H1 (cell line): ENCODE measurements at regions of chr12 and their contacts with region 1.

Region 1: GRCh38 chr12:12786716-12787601 is 1.5 kb downstream of the APOLD1 start:
- DNase-seq: peak; percentile 57 to 73
- H3K4me3 ChIP-seq: peak overlapping the region in 2 of 4 experiments; percentile 37 to 50; a peak in 6 of 8 replicates
- H3K27ac ChIP-seq: no peak overlapping the region
- H3K4me1 ChIP-seq: peaks cover 5 to 13% (median 11%) of the 10 kb centered on the region in 4 experiments
- H3K27me3 ChIP-seq: peaks cover 12 to 29% (median 18%) of the 10 kb centered on the region in 4 experiments
- CTCF ChIP-seq: no peak
- EP300 ChIP-seq: no peak
- POLR2A ChIP-seq: peak in 1 of 2 experiments; percentile 43; a peak in 1 of 3 replicates
- RAD21 ChIP-seq: no peak

Region 2: DNA sequence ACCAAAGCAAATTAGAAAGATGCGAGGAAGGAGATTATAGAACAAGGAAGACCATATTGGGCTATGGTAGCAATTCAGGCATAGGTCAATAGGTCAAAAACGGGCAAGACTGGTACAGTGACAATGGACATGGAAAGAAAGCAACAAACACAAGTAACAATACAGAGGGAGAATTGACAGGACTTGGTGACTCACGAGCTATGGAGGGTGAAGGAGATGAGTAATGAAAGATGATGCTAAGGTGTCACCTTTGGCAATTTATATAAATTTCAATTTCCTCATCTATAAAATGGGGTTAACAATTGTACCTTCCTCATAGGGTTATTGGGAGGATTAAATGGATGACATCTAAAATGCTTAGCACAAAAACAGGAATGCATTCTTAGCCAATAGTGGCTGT is 209.2 kb before region 1 on chr12:
- CTCF ChIA-PET with region 1: no interaction called
- POLR2A ChIA-PET with region 1: no interaction called
- DNase-seq: no peak
- H3K4me3 ChIP-seq: no peak overlapping the region
- H3K27ac ChIP-seq: no peak overlapping the region
- H3K4me1 ChIP-seq: no peaks in the 10 kb centered on the region; a peak in 1 of 7 replicates
- H3K27me3 ChIP-seq: no peaks in the 10 kb centered on the region
- CTCF ChIP-seq: no peak
- EP300 ChIP-seq: no peak
- POLR2A ChIP-seq: no peak
- RAD21 ChIP-seq: no peak

Region 3: DNA sequence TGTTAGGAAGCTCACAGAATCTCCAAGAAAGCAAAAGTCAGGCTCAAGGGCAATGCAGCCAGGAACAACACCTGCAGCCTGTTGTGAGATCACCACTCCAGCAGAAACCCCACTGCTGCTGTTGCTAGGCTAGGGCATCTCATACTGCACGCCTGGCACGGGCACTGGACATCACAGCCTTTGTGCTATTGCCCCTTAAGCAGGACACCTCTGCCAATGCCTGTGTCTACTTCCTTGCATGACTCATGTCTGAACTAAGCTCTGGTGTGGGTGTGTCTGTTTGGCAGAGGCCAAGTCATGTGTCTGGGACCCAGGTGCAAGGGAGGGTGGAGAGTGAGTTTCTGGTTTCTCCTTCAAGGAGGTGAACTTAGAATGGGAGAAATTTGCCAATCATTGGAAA is 16.2 kb after region 1 on chr12:
- CTCF ChIA-PET with region 1: interaction called, 17 read pairs
- POLR2A ChIA-PET with region 1: interaction called, 4 read pairs
- DNase-seq: no peak
- H3K4me3 ChIP-seq: no peak overlapping the region
- H3K27ac ChIP-seq: no peak overlapping the region
- H3K4me1 ChIP-seq: no peaks in the 10 kb centered on the region
- H3K27me3 ChIP-seq: no peaks in the 10 kb centered on the region
- CTCF ChIP-seq: no peak
- EP300 ChIP-seq: no peak
- POLR2A ChIP-seq: no peak
- RAD21 ChIP-seq: no peak

Region 4: DNA sequence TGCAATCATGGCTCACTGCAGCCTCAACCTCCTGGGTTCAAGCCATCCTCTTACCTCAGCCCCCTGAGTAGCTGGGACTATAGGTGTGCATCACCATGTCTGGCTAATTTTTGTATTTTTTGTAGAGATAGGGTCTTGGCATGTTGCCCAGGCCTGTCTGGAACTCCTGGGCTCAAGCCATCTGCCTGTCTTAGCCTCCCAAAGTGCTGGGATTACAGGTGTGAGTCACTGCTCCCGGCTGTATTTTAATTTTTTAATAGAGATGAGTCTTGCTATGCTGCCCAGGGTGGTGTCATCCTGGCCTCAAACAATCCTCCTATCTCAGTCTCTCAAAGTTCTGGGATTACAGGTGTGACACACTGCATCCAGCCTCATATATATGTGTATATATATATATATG is 72.7 kb after region 1 on chr12:
- CTCF ChIA-PET with region 1: no interaction called
- POLR2A ChIA-PET with region 1: no interaction called
- DNase-seq: no peak
- H3K4me3 ChIP-seq: no peak overlapping the region
- H3K27ac ChIP-seq: no peak overlapping the region
- H3K4me1 ChIP-seq: peaks cover 0 to 5% (median 0%) of the 10 kb centered on the region in 4 experiments; a peak in 1 of 7 replicates
- H3K27me3 ChIP-seq: no peaks in the 10 kb centered on the region
- CTCF ChIP-seq: no peak
- EP300 ChIP-seq: no peak
- POLR2A ChIP-seq: no peak
- RAD21 ChIP-seq: no peak